Transverse colon (tissue), 4 donors: ENCODE measurements at regions of chrX and their contacts with region 1.

Region 1: GRCh38 chrX:136028251-136028984 is 43.2 kb downstream of the SLC9A6 start:
- DNase-seq: no peak
- H3K4me3 ChIP-seq: no peak overlapping the region
- H3K27ac ChIP-seq: peak overlapping the region; percentile 73 to 84 (median 78)
- H3K4me1 ChIP-seq: peaks cover 0 to 8% (median 3%) of the 10 kb centered on the region in 4 donors
- H3K27me3 ChIP-seq: no peaks in the 10 kb centered on the region
- CTCF ChIP-seq: peak; percentile 40 to 63 (median 53)
- EP300 ChIP-seq: no peak
- POLR2A ChIP-seq: no peak

Region 2: GRCh38 chrX:135951291-135951690 is 77.1 kb before region 1 on chrX:
- in situ Hi-C with region 1: no loop called
- intact Hi-C with region 1: no loop called
- DNase-seq: no peak
- H3K4me3 ChIP-seq: no peak overlapping the region
- H3K27ac ChIP-seq: no peak overlapping the region
- H3K4me1 ChIP-seq: no peaks in the 10 kb centered on the region
- H3K27me3 ChIP-seq: no peaks in the 10 kb centered on the region
- CTCF ChIP-seq: no peak
- EP300 ChIP-seq: no peak
- POLR2A ChIP-seq: no peak

Region 3: DNA sequence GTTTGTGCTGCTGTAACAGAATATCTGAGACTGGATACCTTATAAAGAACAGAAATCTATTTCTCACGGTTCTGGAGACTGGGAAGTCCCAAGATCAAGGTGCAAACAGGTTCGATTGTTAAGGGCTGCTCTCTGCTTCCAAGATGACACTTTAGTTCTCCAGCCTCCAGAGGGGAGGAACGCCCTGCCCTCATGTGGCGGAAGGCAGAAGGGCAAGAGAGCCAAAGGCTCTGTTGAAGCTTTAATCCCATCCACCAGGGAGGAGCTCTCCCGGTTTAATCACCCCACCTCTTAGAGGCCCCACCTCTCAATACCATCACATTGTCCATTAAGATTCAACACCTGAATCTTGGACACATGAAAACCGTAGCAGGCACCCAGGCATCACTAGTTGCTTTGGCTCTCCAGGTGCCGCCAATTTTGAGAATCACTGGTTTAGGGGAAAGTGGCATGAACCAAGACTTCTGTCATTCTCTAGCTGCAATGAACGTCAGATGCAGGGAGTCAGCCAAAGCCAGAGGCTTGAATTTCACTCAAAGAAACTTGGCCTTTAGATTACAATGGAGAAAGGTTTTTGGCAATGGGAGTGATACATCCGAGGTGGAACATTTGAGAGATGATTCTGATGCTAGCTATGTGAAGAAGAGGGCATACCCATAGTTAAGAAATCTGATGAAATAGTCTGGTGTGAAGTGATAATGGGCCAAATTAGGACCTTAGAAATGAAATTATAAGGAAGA is 134.6 kb after region 1 on chrX:
- in situ Hi-C with region 1: loop called in 1 of 4 experiments (anchors 25 kb)
- intact Hi-C with region 1: loop called (anchors 5 kb)
- DNase-seq: peak; percentile 66
- H3K4me3 ChIP-seq: no peak overlapping the region
- H3K27ac ChIP-seq: peak overlapping the region; percentile 62 to 94 (median 77)
- H3K4me1 ChIP-seq: peaks cover 0 to 22% (median 6%) of the 10 kb centered on the region in 4 donors
- H3K27me3 ChIP-seq: no peaks in the 10 kb centered on the region
- CTCF ChIP-seq: peak; percentile 56 to 64 (median 59)
- EP300 ChIP-seq: no peak
- POLR2A ChIP-seq: no peak

Region 4: DNA sequence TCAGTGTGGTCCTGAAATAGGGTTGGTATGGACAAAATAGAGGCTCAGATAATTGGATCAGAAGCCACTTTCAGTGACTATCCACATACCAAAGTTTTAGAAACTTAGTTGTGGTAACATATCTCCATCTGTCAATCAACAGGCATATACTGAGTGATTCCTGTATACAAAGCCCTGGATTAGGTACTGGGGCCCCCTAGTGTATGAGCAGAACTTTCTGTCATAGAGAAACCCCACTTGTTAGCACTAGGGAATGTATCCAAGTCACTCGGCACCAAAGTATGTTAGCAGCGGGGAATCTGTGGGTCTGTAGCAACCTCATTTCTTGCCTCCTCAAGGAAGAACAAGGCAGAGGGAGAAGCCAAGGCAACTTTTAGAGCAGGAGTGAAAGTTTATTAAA is 172.0 kb after region 1 on chrX:
- in situ Hi-C with region 1: loop called in 1 of 4 experiments (anchors 25 kb)
- intact Hi-C with region 1: loop called (anchors 5 kb)
- DNase-seq: no peak
- H3K4me3 ChIP-seq: peak overlapping the region in 1 of 4 donors; percentile 6
- H3K27ac ChIP-seq: peak overlapping the region; percentile 77 to 82 (median 80)
- H3K4me1 ChIP-seq: peaks cover 15 to 51% (median 19%) of the 10 kb centered on the region in 4 donors
- H3K27me3 ChIP-seq: no peaks in the 10 kb centered on the region
- CTCF ChIP-seq: peak in 3 of 5 experiments; percentile 19 to 32 (median 21)
- EP300 ChIP-seq: no peak
- POLR2A ChIP-seq: no peak

Region 5: GRCh38 chrX:136209016-136209738 is 180.8 kb after region 1 on chrX:
- in situ Hi-C with region 1: loop called in 2 of 4 experiments (anchors 10 to 25 kb)
- intact Hi-C with region 1: loop called (anchors 5 kb)
- DNase-seq: peak; percentile 45
- H3K4me3 ChIP-seq: no peak overlapping the region
- H3K27ac ChIP-seq: peak overlapping the region; percentile 77 to 82 (median 80)
- H3K4me1 ChIP-seq: peaks cover 4 to 19% (median 9%) of the 10 kb centered on the region in 4 donors
- H3K27me3 ChIP-seq: no peaks in the 10 kb centered on the region
- CTCF ChIP-seq: peak; percentile 40 to 65 (median 54)
- EP300 ChIP-seq: no peak
- POLR2A ChIP-seq: no peak

Region 6: DNA sequence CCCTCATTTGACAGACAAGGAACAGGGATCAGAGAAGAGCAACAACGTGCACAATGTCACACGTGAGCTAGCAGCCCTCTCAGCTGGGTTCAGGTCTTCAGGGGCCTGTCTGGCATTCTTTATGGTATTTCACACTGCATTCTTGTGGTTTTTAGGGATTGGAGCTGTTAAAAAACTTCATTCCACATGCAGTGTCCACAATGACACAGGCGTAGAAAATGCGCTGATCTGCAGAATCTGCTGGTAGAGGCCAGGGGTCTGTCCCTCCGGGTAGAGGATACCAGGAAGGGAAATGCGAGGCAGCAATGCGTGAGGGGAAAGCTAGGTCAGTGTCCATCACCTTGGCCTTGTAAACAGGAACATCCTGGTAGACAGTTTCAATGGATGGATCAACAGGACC is 186.1 kb after region 1 on chrX:
- in situ Hi-C with region 1: loop called in 2 of 4 experiments (anchors 10 to 25 kb)
- intact Hi-C with region 1: no loop called
- DNase-seq: no peak
- H3K4me3 ChIP-seq: no peak overlapping the region
- H3K27ac ChIP-seq: peak overlapping the region; percentile 19 to 82 (median 79)
- H3K4me1 ChIP-seq: peaks cover 0 to 1% (median 0%) of the 10 kb centered on the region in 4 donors
- H3K27me3 ChIP-seq: no peaks in the 10 kb centered on the region
- CTCF ChIP-seq: no peak
- EP300 ChIP-seq: no peak
- POLR2A ChIP-seq: no peak

Region 7: DNA sequence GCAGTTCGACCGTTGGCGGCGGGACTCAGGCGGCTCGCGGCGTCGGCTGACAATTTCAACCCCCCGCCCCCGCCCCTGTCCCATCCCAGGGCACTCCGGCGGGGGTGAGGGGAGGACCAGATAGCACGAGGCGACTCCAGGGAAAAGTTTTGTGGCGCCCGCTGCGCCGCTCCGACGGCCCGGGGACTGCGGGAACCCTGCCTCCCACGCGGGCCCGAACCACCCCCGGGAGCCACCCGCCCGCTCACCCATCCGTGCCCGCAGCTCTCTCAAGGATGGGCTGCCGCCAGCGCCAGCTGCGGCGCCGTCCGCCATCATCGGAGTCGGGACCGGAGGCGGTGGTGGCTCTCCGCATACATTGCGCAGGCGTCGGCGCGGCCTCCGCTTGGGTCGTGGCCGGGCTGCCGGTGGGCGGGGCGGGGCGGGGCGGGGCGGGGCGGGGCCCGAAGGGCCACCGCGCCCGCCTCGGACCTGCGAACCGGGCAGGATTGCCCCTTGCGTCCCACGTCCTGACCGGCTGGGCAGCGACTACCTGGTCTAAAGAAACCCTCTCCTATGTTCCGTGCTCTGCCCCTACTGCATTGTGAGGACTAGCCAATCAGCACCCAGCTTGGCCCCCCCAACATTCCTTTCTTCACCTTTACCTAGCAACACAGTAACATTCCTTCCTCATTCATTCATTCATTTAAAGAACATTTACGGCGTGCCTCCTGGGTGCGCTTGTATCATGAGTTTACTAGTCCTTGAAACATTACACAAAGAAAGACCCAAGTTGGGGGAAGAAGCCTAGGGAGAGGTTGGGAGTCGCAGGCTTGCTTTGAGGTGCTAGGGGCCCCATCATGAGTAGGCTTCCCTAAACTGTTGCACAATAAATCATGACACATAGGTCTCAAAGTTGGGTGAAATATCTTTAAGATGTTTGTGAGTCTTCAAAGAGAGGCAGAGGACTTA is 222.9 kb after region 1 on chrX and contains the start of gene MAP7D3:
- in situ Hi-C with region 1: loop called in 1 of 4 experiments (anchors 25 kb)
- intact Hi-C with region 1: no loop called
- DNase-seq: peak; percentile 64
- H3K4me3 ChIP-seq: peak within 1 kb of the TSS; percentile 54 to 78 (median 69)
- H3K27ac ChIP-seq: peak within 1 kb of the TSS; percentile 75 to 85 (median 80)
- H3K4me1 ChIP-seq: peaks cover 0 to 6% (median 0%) of the 10 kb centered on the region in 4 donors
- H3K27me3 ChIP-seq: no peaks in the 10 kb centered on the region
- CTCF ChIP-seq: no peak
- EP300 ChIP-seq: no peak
- POLR2A ChIP-seq: no peak
- total RNA-seq, gene MAP7D3: 2.2 to 10.9 (median 5.2) TPM

Region 8: GRCh38 chrX:136272332-136272731 is 243.9 kb after region 1 on chrX:
- in situ Hi-C with region 1: loop called in 1 of 4 experiments (anchors 25 kb)
- intact Hi-C with region 1: loop called (anchors 5 kb)
- DNase-seq: no peak
- H3K4me3 ChIP-seq: no peak overlapping the region
- H3K27ac ChIP-seq: no peak overlapping the region
- H3K4me1 ChIP-seq: peaks cover 0 to 8% (median 2%) of the 10 kb centered on the region in 4 donors
- H3K27me3 ChIP-seq: no peaks in the 10 kb centered on the region
- CTCF ChIP-seq: no peak
- EP300 ChIP-seq: no peak
- POLR2A ChIP-seq: no peak

Region 9: DNA sequence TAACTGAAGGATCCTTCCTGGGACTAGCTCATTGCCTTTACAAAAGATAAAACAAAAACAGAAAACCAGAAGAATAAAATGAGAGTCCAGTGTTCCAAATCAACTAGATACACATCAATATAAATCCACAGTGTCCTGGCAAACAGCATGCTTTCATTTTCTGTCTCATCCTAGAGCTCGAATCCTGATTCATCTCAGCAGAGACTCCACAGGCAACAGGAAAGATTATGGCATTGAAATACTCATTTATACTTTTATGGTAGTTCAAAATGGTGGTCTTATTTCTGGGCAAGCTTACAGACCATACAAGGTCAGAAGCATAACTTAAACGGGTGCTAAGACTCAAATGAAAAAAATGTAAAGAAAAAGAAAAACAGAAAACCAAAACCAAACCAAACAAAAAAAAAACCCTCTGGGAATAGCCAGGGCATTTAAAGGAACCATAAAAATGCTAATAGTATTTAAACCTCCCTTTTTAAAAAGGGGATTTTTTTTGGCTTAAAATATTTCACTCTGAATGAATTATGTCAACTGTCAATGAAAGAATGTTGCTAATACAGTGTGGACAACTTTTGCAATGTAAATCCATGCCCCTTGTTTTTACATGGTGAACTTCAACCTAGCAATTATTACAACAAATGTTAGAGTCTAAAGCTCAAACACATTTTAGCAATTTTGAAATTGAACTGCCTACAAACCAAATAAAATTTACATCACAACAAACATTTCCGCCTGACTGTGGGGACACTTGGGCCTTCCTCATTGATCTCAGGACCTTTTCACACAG is 947.5 kb after region 1 on chrX:
- in situ Hi-C with region 1: no loop called
- intact Hi-C with region 1: no loop called
- DNase-seq: no peak
- H3K4me3 ChIP-seq: no peak overlapping the region
- H3K27ac ChIP-seq: no peak overlapping the region
- H3K4me1 ChIP-seq: no peaks in the 10 kb centered on the region
- H3K27me3 ChIP-seq: no peaks in the 10 kb centered on the region
- CTCF ChIP-seq: no peak
- EP300 ChIP-seq: no peak
- POLR2A ChIP-seq: no peak